ENCODE measurements at regions of chr19 and their contacts with region 1.

Region 1: DNA sequence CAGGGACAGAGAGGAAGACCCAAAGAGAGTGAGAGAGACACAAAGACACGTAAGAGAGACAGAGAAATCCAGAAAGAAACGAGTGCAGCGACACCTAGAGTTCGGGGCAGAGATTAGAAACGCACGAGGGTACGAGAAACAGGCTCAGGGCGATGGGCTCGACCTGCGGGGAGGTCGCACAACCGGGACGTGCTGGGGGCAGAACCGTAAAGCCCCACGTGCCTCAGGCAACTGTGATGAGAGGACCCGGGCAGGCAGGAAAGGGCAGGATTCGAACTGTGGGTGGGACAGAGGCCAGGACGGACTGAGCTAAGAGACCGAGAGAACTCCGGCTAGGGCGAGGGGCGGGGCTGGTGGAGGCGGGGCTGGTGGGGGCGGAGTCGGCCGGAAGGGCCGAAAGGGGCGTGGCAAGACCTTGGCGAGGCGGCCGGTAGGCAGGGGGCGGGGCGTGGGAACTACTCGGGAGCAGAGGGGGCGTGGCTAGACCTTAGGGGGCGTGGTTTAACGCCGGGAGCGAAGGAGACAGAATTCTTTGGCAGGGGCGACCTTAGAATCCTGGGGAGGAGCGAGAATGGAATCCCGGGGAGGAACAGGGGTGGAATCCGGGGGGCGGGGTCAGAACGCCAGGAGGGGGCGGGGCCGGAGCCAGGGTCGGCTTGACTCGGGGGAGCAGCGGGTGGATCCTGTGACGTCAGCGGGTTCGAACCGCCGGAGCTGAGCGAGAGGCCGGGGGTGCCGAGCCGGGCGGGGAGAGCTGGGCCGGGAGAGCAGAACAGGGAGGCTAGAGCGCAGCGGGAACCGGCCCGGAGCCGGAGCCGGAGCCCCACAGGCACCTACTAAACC is at the start of gene NECTIN2:
- H3K4me3 Mint-ChIP-seq: peak within 1 kb of the TSS; percentile 91
- H3K27ac Mint-ChIP-seq: peak within 1 kb of the TSS; percentile 93
- H3K4me1 Mint-ChIP-seq: peaks cover 50% of the 10 kb centered on the region
- H3K27me3 Mint-ChIP-seq: peaks cover 2% of the 10 kb centered on the region

Region 2: GRCh38 chr19:44689056-44689895 is 156.6 kb before region 1 on chr19:
- intact Hi-C with region 1: loop called (anchors 2 kb)
- H3K4me3 Mint-ChIP-seq: no peak overlapping the region
- H3K27ac Mint-ChIP-seq: peak overlapping the region; percentile 67
- H3K4me1 Mint-ChIP-seq: peaks cover 74% of the 10 kb centered on the region
- H3K27me3 Mint-ChIP-seq: peaks cover 6% of the 10 kb centered on the region

Region 3: DNA sequence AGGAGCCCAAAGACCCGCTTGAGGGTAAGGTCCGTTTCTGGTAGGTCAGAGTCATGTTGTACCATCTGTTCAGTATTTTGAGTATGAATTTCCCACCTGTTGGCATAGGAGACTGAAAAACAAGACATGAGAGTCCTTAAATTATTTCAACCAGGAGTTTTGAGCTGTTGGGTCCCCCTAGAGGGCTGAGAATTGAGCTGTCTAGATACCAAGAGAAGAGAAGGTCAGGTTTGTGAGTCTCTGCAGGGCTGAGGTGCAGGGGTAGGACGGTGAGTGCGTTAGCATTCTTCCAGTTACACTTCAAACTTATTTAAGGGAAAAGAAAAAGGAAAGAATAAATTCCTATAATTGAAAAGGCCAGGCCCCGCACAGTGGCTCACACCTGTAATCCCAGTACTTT is 63.1 kb before region 1 on chr19:
- intact Hi-C with region 1: loop called (anchors 5 kb)
- H3K4me3 Mint-ChIP-seq: no peak overlapping the region
- H3K27ac Mint-ChIP-seq: no peak overlapping the region
- H3K4me1 Mint-ChIP-seq: peaks cover 15% of the 10 kb centered on the region
- H3K27me3 Mint-ChIP-seq: peaks cover 8% of the 10 kb centered on the region

Region 4: DNA sequence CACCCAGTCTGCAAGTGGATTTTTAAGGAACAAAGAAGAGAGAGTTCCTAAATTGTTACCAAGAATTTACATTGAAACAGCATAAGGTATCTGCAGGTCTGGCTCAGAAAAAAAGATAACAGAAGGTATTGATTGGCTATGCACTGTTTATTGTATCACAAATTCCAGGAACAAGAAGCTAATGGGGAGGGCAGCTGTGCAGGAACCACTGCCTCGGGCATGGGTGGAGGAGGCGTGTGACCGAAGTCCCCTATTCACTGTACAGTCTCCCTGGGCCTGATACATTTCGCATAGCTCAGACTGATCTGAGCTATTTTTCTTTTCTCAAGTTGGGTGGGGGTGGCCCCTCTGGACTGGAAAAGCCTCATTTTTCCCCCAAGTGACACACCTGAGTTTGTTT is 12.0 kb after region 1 on chr19:
- intact Hi-C with region 1: no loop called
- H3K4me3 Mint-ChIP-seq: no peak overlapping the region
- H3K27ac Mint-ChIP-seq: peak overlapping the region; percentile 90
- H3K4me1 Mint-ChIP-seq: peaks cover 36% of the 10 kb centered on the region
- H3K27me3 Mint-ChIP-seq: no peaks in the 10 kb centered on the region

Region 5: GRCh38 chr19:44869733-44870470 is 24.1 kb after region 1 on chr19:
- intact Hi-C with region 1: loop called (anchors 2 kb)
- H3K4me3 Mint-ChIP-seq: peak overlapping the region; percentile 7
- H3K27ac Mint-ChIP-seq: peak overlapping the region; percentile 81
- H3K4me1 Mint-ChIP-seq: peaks cover 50% of the 10 kb centered on the region
- H3K27me3 Mint-ChIP-seq: no peaks in the 10 kb centered on the region